BJ (cell line): ENCODE measurements at regions of chr3 and their contacts with region 1.

Region 1: GRCh38 chr3:194333212-194333980 is 17.7 kb downstream of the CPN2 start:
- DNase-seq: no peak
- H3K4me3 ChIP-seq: peak overlapping the region; percentile 63
- H3K27me3 ChIP-seq: no peaks in the 10 kb centered on the region
- CTCF ChIP-seq: peak; percentile 98

Region 2: GRCh38 chr3:194255252-194256039 is 78.0 kb before region 1 on chr3:
- CTCF ChIA-PET with region 1: no interaction called
- POLR2A ChIA-PET with region 1: no interaction called
- DNase-seq: no peak
- H3K4me3 ChIP-seq: no peak overlapping the region
- H3K27me3 ChIP-seq: peaks cover 17% of the 10 kb centered on the region
- CTCF ChIP-seq: no peak

Region 3: GRCh38 chr3:194404365-194405140 is 71.2 kb after region 1 on chr3:
- CTCF ChIA-PET with region 1: interaction called, 347 read pairs
- POLR2A ChIA-PET with region 1: no interaction called
- DNase-seq: no peak
- H3K4me3 ChIP-seq: no peak overlapping the region
- H3K27me3 ChIP-seq: no peaks in the 10 kb centered on the region
- CTCF ChIP-seq: peak; percentile 58